Panc1 (cell line): ENCODE measurements at regions of chr1 and their contacts with region 1.

Region 1: DNA sequence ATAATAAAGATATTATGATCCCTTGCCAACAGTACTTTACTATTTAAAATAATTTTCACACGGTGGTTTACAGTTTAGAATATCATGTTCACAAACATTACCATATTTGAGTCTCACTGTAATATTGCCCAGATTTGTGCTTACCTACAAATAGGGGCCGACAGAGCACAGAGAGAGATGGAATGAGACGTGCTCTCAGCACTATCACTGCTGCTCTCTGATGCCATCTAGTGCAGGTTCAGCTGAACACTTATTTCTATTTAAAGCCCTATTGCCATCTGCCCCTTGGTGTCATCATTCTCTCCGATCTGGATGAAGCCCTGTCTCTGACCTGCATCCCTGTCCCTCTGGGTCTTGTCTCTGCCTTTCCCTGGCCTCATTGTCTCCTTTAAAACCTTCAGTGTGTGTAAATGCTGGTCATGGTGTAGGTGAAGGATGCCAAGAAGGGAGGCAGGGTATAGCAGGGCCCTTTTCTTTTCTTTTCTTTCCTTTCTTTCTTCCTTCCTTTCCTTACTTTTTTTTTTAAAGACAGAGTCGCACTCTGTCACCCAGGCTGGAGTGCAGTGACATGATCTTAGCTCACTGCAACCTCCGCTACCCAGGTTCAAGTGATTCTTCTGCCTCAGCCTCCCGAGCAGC is 6.9 kb upstream of the GPATCH4 start:
- DNase-seq: no peak
- ATAC-seq: peak; percentile 93
- H3K4me3 ChIP-seq: no peak overlapping the region
- H3K27ac ChIP-seq: no peak overlapping the region
- H3K4me1 ChIP-seq: 0 out of 2 replicates have a peak, but pooled peaks cover 5% of the 10 kb centered on the region
- H3K27me3 ChIP-seq: no peaks in the 10 kb centered on the region
- CTCF ChIP-seq: peak; percentile 90

Region 2: GRCh38 chr1:156578055-156578454 is 30.1 kb before region 1 on chr1:
- CTCF ChIA-PET with region 1: interaction called, 10 read pairs
- POLR2A ChIA-PET with region 1: no interaction called
- in situ Hi-C with region 1: no loop called
- intact Hi-C with region 1: no loop called
- DNase-seq: no peak
- ATAC-seq: no peak
- H3K4me3 ChIP-seq: no peak overlapping the region
- H3K27ac ChIP-seq: no peak overlapping the region
- H3K4me1 ChIP-seq: no peaks in the 10 kb centered on the region
- H3K27me3 ChIP-seq: no peaks in the 10 kb centered on the region
- CTCF ChIP-seq: no peak

Region 3: GRCh38 chr1:156584813-156585212 is 23.3 kb before region 1 on chr1:
- CTCF ChIA-PET with region 1: interaction called, 5 read pairs
- POLR2A ChIA-PET with region 1: no interaction called
- in situ Hi-C with region 1: no loop called
- intact Hi-C with region 1: loop called (anchors 1 kb)
- DNase-seq: no peak
- ATAC-seq: 0 out of 2 replicates have a peak, but pooled peaks have one; percentile 37
- H3K4me3 ChIP-seq: no peak overlapping the region
- H3K27ac ChIP-seq: no peak overlapping the region
- H3K4me1 ChIP-seq: peaks cover 19% of the 10 kb centered on the region
- H3K27me3 ChIP-seq: no peaks in the 10 kb centered on the region
- CTCF ChIP-seq: no peak; the same call in 1 of the 2 replicates

Region 4: DNA sequence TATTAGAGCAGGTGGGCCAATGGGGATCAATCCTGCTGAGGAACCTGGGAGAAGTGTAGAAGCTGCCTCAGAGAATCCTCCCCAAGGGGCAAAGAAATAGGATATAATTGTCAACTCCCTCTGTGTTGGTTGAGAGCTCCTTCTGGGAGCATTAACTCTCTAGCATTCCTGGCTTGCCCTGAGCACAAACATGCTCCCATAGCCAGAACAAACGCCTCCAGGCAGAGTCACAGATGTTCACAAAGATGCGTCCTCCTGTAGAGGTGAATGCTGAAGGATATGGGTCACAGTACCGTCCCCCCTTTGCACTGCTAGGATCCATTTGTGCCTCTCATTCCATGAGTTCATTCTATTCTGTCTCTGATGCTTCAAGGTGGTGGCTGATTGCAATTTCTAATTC is 24.2 kb after region 1 on chr1:
- CTCF ChIA-PET with region 1: no interaction called
- POLR2A ChIA-PET with region 1: no interaction called
- in situ Hi-C with region 1: no loop called
- intact Hi-C with region 1: no loop called
- DNase-seq: no peak
- ATAC-seq: no peak
- H3K4me3 ChIP-seq: no peak overlapping the region
- H3K27ac ChIP-seq: no peak overlapping the region
- H3K4me1 ChIP-seq: no peaks in the 10 kb centered on the region; the same call in 1 of the 2 replicates
- H3K27me3 ChIP-seq: no peaks in the 10 kb centered on the region
- CTCF ChIP-seq: no peak

Region 5: GRCh38 chr1:156728597-156729462 is 120.7 kb after region 1 on chr1 and contains the start of gene ISG20L2:
- CTCF ChIA-PET with region 1: no interaction called
- POLR2A ChIA-PET with region 1: no interaction called
- in situ Hi-C with region 1: no loop called
- intact Hi-C with region 1: no loop called
- DNase-seq: peak; percentile 91
- ATAC-seq: peak; percentile 94
- H3K4me3 ChIP-seq: peak within 1 kb of the TSS; percentile 87 to 99
- H3K27ac ChIP-seq: peak within 1 kb of the TSS; percentile 97
- H3K4me1 ChIP-seq: peaks cover 24% of the 10 kb centered on the region
- H3K27me3 ChIP-seq: no peaks in the 10 kb centered on the region
- CTCF ChIP-seq: no peak
- total RNA-seq, gene ISG20L2: 40.6 TPM

Region 6: DNA sequence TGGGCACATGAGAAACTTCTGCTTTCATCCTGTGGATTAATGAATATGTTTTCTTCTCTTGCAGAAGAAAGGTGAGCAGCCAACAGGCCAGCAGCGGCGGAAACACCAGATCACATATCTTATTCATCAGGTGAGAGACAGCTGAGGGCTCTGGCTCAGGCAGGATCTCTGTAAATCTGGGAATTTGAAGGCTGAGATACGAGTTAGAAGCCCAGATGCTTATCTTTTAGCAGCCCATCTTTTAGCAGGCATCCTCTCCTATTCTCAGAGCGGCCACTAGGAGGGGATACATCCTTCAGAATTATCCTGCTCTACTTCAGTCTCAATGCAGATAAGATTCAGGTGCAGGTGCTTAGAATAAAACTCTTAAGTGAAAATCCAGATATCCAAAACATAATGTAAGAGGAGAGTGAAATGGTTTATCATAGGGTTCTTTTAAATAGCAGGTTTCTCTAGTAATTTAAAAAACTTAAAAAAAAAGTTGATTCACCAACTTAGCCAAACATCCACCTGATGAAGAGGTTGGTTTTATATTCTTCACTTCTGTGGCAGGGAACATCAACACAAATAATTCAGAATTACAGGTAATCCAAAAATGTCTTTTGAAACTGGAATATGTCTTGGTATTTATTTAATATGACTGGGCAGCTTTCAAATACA is 189.2 kb after region 1 on chr1:
- CTCF ChIA-PET with region 1: no interaction called
- POLR2A ChIA-PET with region 1: no interaction called
- in situ Hi-C with region 1: no loop called
- intact Hi-C with region 1: no loop called
- DNase-seq: peak; percentile 45
- ATAC-seq: peak; percentile 83
- H3K4me3 ChIP-seq: no peak overlapping the region
- H3K27ac ChIP-seq: no peak overlapping the region
- H3K4me1 ChIP-seq: no peaks in the 10 kb centered on the region
- H3K27me3 ChIP-seq: no peaks in the 10 kb centered on the region
- CTCF ChIP-seq: peak; percentile 86

Region 7: GRCh38 chr1:157056269-157056668 is 448.1 kb after region 1 on chr1:
- CTCF ChIA-PET with region 1: no interaction called
- POLR2A ChIA-PET with region 1: no interaction called
- in situ Hi-C with region 1: no loop called
- intact Hi-C with region 1: no loop called
- DNase-seq: no peak
- ATAC-seq: no peak
- H3K4me3 ChIP-seq: no peak overlapping the region
- H3K27ac ChIP-seq: no peak overlapping the region
- H3K4me1 ChIP-seq: no peaks in the 10 kb centered on the region
- H3K27me3 ChIP-seq: no peaks in the 10 kb centered on the region
- CTCF ChIP-seq: no peak